ENCODE measurements at regions of chr2 and their contacts with region 1.

Region 1: GRCh38 chr2:73176881-73177644 is 25.3 kb upstream of the NOTO start:
- DNase-seq: peak; percentile 90
- H3K27ac ChIP-seq: no peak overlapping the region
- CTCF ChIP-seq: peak; percentile 98

Region 2: GRCh38 chr2:72973566-72974435 is 203.3 kb before region 1 on chr2:
- CTCF ChIA-PET with region 1: interaction called, 12 read pairs
- POLR2A ChIA-PET with region 1: no interaction called
- DNase-seq: peak; percentile 76
- H3K27ac ChIP-seq: no peak overlapping the region
- CTCF ChIP-seq: peak; percentile 81

Region 3: DNA sequence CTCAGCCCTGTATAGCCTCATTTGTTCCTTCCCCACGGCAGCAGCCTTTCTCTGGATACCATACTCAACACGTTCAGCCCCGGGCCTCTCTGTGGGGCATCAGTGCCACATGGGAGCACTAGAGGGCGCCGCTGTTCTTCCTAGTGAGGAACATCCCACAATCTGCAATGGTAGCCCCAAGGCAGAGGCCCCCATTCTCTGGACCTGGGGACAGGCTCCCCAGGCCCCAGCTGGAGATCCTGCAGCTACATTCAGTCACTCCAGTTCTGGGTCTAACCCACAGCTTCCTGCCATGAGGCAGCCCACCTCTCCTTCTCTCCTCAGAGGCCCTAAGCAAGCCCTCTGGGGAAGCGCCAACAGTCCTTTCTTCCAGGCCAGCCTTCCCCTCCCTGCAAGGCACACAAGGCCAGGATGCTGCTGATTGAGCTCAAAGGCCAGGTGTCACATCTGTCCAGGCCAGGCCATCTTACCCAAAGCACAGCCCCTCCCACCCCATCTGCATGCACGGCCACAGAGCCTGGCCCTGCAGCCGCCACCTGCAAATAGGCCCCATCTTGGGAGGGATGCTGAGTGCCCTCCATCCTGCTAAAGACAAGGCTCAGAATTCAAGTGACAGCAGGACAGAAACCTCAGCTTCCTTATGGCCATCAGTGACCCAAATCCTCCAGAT is 91.2 kb before region 1 on chr2:
- CTCF ChIA-PET with region 1: interaction called, 16 read pairs
- POLR2A ChIA-PET with region 1: no interaction called
- DNase-seq: peak; percentile 67
- H3K27ac ChIP-seq: peak overlapping the region; percentile 86
- CTCF ChIP-seq: peak; percentile 93

Region 4: GRCh38 chr2:73202156-73203054 is 25.3 kb after region 1 on chr2 and contains the start of gene NOTO:
- CTCF ChIA-PET with region 1: interaction called, 14 read pairs
- POLR2A ChIA-PET with region 1: no interaction called
- DNase-seq: no peak
- H3K27ac ChIP-seq: no peak within 1 kb of the TSS
- CTCF ChIP-seq: no peak

Region 5: DNA sequence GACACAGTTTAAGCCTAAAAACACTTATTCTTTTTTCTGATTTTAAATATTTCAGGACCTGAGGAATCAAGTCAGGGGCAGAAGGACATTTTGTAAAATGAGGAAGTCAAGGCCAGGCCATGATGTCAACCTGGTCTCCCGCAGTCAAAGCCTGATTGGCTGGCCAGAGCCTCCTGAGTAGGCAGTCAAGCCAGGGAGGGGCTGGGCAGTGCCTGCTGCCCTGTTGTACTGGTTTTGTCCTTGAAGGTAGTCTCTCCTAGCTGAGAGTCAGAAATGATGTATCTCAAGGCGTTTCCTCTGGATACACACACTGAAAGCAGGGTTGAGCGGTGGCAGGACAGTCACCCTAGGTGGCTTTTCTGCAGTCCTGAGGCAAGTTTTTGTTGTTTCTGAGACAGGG is 76.8 kb after region 1 on chr2:
- CTCF ChIA-PET with region 1: no interaction called
- POLR2A ChIA-PET with region 1: no interaction called
- DNase-seq: no peak
- H3K27ac ChIP-seq: peak overlapping the region; percentile 65
- CTCF ChIP-seq: no peak

Measured in RWPE1 (cell line).